ENCODE measurements at regions of chr18 and their contacts with region 1.

Region 1: DNA sequence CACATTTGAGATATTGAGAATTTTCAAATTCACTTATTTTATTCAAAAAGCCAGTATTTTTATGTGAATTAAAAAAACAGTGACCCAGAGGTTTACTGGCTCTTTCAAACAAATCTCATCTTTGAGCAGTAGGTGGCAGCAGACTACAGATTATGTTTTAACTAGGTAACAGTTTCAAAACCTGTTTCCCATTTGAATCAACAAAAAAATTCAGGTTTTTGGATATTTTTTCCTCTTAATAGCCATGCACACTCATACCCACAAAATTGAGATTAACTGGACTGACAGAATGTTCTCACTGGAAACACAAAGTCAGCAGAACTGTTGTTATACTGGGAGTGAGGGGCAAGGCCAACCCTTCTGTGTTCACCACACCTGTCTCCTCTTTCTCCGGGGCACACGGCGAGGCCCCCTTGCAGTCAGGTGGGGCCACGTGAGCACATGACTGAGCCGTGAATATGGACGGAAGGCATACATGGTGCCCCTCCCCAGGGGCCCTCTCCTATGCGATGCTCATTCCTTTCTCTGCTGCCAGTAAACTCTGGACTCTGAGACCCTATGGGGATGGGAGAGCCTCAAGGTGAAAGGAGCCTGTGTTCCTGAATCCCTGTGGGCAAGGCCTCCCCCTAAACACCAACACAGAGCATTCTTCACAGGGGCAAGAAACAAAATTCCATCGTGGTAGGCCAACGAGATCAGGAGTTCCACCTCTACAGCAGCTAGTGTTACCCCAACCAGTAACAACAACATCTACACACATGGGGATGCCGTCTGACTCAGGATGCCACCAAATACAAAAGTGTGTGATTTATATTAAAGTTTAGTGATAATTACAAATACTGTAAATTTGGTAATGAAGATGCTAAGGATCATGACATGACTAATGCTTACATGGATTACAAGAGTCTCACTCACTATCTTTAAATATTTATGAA is 80.4 kb downstream of the LPIN2 start:
- DNase-seq: peak; percentile 55 to 64
- H3K4me3 ChIP-seq: no peak overlapping the region
- H3K4me1 ChIP-seq: no peaks in the 10 kb centered on the region
- H3K27me3 ChIP-seq: no peaks in the 10 kb centered on the region

Region 2: GRCh38 chr18:3151399-3152264 is 219.1 kb after region 1 on chr18:
- in situ Hi-C with region 1: loop called (anchors 10 kb)
- DNase-seq: peak in 1 of 2 experiments; percentile 50
- H3K4me3 ChIP-seq: no peak overlapping the region
- H3K4me1 ChIP-seq: no peaks in the 10 kb centered on the region
- H3K27me3 ChIP-seq: no peaks in the 10 kb centered on the region

Region 3: DNA sequence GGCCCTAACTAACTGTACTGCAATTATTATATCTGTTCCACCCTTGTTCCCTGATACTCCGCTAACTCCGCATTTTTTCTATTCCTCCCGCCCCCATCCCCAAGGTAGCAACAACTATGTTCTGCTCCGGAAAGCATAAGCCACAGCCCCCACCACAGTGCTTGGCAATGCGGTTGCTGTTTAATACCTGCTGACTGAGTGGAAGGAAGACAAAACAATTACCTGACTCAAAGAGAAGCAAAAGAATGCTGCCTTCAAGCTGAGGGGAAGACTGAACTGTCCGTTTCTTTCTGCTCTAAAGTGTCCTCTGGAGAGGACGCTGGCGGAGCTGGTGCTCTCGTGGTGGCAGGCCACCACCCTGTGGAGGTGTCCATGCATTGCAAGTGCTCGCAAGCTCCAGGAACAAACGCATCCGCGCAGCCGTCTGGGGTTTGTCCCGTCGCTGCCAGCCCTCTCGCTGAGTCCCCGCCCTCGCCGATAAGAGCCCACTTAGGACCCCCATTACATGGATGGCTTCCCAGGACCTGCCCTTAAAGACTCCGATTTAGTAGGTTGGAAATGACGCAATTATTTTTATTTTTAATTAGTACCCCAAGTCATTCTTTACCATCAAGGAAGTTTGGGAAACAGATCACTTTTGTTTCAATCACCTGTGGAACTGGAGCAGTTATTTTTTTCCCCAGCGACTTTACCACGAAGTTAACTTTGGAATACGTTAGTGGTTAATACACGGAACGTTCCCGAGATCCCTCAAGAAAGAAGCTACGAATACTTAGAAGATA is 313.5 kb after region 1 on chr18:
- in situ Hi-C with region 1: loop called (anchors 5 kb)
- DNase-seq: peak; percentile 91 to 92
- H3K4me3 ChIP-seq: peak overlapping the region; percentile 93
- H3K4me1 ChIP-seq: peaks cover 32% of the 10 kb centered on the region
- H3K27me3 ChIP-seq: no peaks in the 10 kb centered on the region

Region 4: GRCh38 chr18:3631887-3632286 is 699.4 kb after region 1 on chr18:
- in situ Hi-C with region 1: no loop called
- DNase-seq: no peak
- H3K4me3 ChIP-seq: no peak overlapping the region
- H3K4me1 ChIP-seq: peaks cover 6% of the 10 kb centered on the region
- H3K27me3 ChIP-seq: no peaks in the 10 kb centered on the region

Measured in HAP-1 (cell line).